ENCODE measurements at regions of chr3 and their contacts with region 1.

Region 1: GRCh38 chr3:47420511-47421484 is 40.0 kb downstream of the PTPN23 start:
- DNase-seq: peak; percentile 87 to 89
- H3K4me3 ChIP-seq: no peak overlapping the region
- H3K27ac ChIP-seq: peak overlapping the region; percentile 28 to 74 (median 57)
- H3K4me1 ChIP-seq: peaks cover 13% of the 10 kb centered on the region in 2 donors
- H3K27me3 ChIP-seq: no peaks in the 10 kb centered on the region
- CTCF ChIP-seq: peak; percentile 69 to 93 (median 88)
- POLR2A ChIP-seq: no peak

Region 2: DNA sequence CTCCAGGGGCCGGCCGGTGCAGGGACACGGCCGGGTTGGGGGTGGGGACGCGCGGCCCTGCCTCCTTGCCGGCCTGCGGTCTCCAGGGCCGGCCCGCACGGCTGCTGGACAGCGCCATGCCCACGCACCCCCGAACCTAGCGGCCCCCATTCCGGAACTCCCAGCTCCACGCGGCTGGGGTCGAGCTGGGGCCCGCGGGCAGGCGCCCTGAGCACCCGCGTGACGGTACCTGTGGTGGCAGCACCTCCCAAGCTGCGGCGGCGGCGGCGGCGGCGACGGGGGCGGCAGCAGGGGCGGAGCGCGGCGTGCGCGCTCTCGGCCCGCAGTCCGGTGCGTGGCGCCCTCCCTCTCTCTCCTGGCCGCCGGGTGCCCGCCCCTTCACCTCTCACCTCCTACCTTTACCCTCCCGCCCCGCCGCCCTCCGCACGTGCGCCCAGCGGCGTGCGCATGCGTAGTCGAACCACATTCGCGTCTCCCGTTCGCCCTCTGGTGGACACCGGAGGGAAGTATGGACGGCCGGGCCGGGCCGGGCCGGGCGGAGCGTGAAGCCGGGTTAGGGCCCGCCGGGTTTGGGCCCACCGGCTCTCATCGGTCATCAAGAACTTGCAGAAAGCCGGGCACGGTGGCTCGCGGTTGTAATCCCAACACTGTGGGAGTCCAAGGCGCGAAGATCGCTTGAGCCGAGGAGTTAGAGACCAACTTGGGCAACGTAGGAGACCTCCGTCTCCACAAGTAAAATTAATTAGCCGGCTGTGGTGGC is 55.0 kb after region 1 on chr3 and contains the start of gene SCAP:
- intact Hi-C with region 1: loop called (anchors 2 kb)
- DNase-seq: peak; percentile 94 to 95
- H3K4me3 ChIP-seq: peak within 1 kb of the TSS; percentile 68 to 92 (median 84)
- H3K27ac ChIP-seq: peak within 1 kb of the TSS; percentile 59 to 89 (median 79)
- H3K4me1 ChIP-seq: peaks cover 24 to 39% of the 10 kb centered on the region in 2 donors
- H3K27me3 ChIP-seq: no peaks in the 10 kb centered on the region
- CTCF ChIP-seq: peak; percentile 82 to 98 (median 95)
- POLR2A ChIP-seq: peak in 1 of 2 donors; percentile 72
- total RNA-seq, gene SCAP: 56.8 to 102 (median 88.8) TPM

Region 3: DNA sequence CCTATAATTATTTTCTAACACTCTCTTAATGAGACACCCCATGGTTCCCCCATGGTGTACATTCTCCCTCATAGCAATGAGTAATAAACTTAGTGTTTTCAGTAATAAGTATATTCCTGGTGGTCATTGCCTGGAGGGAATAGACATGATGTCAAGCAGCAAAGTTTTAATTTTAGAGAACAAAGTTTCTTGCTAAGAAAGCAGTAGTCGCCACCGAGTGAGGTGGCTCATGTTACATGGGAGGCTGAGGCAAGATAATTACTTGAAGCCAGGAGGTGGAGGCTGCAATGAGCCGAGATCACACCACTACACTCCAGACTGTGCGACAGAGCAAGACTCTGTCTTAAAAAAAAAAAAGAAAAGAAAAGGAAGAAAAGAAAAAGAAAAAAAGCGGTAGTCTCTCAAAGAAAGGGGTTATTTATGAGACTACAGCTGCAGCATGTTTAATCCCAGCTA is 95.1 kb after region 1 on chr3:
- intact Hi-C with region 1: loop called (anchors 5 kb)
- DNase-seq: no peak
- H3K4me3 ChIP-seq: no peak overlapping the region
- H3K27ac ChIP-seq: no peak overlapping the region
- H3K4me1 ChIP-seq: peaks cover 0 to 8% of the 10 kb centered on the region in 2 donors
- H3K27me3 ChIP-seq: no peaks in the 10 kb centered on the region
- CTCF ChIP-seq: no peak
- POLR2A ChIP-seq: no peak

Measured in thyroid gland (tissue), 4 donors.